ENCODE measurements at regions of chr17 and their contacts with region 1.

Region 1: DNA sequence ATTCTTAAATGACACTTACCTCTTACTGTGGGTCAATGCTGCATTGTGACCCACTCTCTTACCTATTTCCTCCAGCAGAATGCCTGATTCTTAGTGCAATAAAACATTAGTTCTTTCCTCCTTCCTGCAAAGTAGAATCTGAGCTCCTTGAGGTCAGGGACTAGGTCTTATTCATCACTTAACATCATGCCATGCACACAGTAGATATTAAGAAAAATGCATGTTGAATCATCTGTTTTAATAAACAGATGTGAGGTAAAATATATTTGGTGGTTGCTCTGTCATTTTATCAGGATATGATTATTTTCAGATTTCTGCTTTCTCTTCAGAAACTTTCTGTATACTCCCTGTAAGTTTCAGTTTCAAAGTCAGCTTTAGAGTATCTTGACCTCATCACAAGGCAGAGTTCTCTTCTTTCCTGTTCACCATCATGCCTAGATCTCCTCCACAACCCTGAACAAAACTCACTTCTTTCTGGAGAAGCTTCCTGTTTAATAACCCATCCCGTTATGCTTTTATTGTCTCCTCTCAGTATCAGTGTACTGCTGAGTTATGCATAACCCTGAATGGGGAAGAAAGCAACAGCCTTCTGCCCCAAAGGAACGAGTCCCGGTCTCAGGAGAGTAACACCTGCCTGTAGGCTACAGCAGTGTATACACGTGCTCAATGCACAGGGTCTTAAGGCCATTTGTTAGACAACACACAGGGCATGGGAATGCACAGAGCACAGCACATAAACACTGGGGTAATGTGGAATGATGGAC is 30.3 kb upstream of the SUPT4H1 start:
- DNase-seq: no peak
- ATAC-seq: peak; percentile 15 to 31; a peak in 2 of 6 replicates
- H3K4me3 ChIP-seq: no peak overlapping the region
- H3K27ac ChIP-seq: peak overlapping the region; percentile 70 to 73
- H3K4me1 ChIP-seq: peaks cover 74% of the 10 kb centered on the region
- CTCF ChIP-seq: no peak
- EP300 ChIP-seq: no peak
- POLR2A ChIP-seq: no peak
- RAD21 ChIP-seq: no peak

Region 2: DNA sequence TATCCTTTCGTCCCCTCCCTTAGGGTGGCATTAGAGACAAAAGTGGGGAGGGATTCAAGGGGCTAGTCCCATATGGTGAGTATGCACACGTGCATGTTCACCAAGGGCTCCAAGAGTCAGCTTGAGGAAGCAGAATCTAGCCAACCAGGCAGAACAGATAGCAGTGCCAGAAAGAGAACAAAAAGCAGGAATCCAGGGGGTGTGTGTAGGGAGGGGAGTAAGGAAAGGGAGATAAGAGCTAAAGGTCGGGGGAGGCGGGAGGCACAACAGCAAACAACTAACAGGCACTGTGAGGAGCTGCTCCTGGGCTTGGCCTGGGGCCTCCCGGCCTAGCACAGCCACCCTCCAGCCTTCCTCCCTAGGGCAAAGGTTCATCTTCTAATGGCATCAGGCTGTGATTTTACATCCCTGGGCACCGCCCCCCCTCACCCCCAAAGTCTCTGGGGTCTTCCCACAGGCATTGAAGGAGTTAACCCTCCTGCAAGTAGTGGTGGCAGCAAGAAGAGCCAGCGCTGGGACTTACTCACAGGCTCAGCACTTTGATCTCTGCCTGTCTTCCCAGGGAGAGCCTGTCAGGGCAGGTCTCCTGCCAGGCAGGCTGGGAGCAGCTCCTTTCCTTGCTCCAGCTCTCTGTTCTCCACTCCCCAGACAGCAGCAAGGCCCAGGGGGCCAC is 17.9 kb before region 1 on chr17:
- CTCF ChIA-PET with region 1: interaction called, 11 read pairs
- POLR2A ChIA-PET with region 1: interaction called, 4 read pairs
- DNase-seq: no peak
- ATAC-seq: peak in 1 of 2 experiments; percentile 39; a peak in 3 of 6 replicates
- H3K4me3 ChIP-seq: no peak overlapping the region
- H3K27ac ChIP-seq: peak overlapping the region; percentile 26 to 50; a peak in 4 of 6 replicates
- H3K4me1 ChIP-seq: peaks cover 18% of the 10 kb centered on the region
- CTCF ChIP-seq: no peak
- EP300 ChIP-seq: no peak
- POLR2A ChIP-seq: no peak
- RAD21 ChIP-seq: no peak

Measured in A549 (cell line).